GM13977 (cell line): ENCODE measurements at regions of chr3 and their contacts with region 1.

Region 1: GRCh38 chr3:47836986-47837385 is 34.0 kb downstream of the DHX30 start:
- DNase-seq: no peak
- CTCF ChIP-seq: no peak

Region 2: GRCh38 chr3:47989981-47990440 is 153.0 kb after region 1 on chr3:
- in situ Hi-C with region 1: loop called (anchors 10 kb)
- DNase-seq: peak; percentile 62
- CTCF ChIP-seq: peak; percentile 88

Region 3: DNA sequence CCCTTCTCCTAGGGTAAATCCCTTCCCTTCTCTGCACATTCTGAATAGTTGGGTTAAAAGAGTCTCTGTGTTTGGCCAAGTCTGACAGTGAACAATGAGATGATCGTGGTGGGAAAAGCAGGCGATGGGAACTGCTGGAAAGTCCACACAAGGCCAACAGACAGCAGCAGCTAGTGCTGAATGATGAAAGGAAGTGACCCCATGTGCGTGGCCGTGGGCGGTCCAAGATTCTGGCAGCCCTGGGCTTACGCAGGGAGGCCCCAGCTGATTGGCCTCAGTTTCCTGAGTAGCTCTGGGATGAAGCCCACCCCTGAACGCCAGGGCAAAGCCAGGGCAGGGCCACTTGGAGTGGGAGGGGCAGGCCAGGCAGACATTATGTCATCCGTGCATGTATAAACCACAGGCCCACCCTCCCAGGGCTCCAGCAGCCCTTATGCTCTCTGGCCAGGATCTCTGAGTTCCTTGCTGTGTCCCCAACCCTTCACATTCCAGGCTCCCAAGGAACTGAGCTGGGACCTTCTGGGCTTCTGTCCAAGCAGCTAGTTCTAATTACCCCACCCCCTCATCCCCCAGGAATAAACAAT is 293.4 kb after region 1 on chr3:
- in situ Hi-C with region 1: no loop called
- DNase-seq: no peak
- CTCF ChIP-seq: no peak

Region 4: DNA sequence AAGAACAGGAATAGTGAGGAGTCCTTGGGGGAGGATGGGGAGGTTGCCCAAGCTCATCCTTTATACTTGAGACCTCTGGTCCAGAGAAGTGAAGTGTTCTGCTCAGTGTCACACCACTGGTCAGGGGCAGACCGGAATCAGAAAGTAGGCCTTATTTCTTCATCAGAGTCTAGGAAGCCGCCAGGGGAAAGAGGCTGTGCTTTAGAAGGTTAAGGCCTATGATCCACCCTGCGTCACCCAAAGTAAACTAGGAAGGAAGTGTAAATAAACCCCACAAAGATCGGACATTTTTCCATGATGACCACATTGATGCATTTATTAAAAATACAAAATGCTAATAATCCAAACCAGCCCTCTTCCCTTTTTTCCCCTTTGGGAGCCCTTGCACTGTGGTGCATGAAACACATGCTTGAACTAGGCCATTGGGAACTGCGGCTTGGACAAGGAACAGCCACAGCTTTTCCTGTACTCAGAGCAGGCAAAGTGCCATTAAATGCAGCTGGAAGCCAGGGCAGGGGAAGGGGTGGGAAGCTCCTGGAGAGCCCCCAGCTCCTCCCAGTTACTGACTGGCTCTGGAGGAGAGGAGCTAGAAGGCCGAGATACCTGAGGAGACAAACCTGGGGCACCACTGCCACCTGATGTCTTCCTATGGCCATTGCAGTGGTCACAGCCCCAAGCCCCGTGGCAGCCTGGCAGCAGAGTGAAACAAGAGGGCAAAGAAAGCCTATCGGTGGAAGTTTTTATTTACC is 314.2 kb after region 1 on chr3:
- in situ Hi-C with region 1: loop called (anchors 10 kb)
- DNase-seq: peak; percentile 82
- CTCF ChIP-seq: peak; percentile 94